Sigmoid colon (tissue), 7 donors: ENCODE measurements at regions of chr18 and their contacts with region 1.

Region 1: DNA sequence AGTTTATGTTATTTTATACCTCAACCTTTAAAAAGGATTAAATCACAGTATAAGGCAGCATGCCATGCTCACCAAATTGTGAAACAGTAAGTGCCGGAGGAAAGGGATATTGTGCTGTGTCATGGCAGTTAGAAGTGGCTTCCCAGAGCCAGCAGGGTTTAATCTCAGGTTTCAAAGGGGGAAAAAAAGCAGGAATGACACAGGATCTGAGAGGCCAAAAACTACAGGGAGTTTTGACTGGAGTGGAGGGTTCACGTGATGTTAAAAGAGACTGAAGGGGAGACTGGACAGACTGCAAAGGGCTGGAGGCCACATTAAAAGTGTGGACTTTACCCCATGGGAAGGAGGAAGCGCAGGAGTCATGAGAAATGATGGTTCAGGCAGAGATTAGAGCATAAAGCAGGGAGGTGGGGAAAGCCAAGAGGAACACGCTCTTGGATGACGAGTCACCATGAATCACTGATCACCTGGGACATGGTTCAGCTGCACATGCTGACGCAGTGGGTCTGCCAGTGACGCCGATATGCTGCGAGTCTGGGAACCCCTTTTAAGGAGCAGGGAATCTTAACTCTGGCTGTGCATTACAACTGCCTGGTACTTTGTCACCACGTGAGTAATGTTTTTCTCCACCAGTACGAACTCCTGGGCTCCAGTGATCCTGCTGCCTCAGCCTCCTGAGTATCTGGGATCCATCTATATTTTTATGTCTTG is 6.1 kb downstream of the CHMP1B start:
- DNase-seq: peak; percentile 95
- H3K4me3 ChIP-seq: peak overlapping the region in 2 of 4 donors; percentile 14 to 15
- H3K27ac ChIP-seq: peak overlapping the region; percentile 81 to 99 (median 84)
- H3K4me1 ChIP-seq: peaks cover 0 to 42% (median 38%) of the 10 kb centered on the region in 4 donors
- H3K27me3 ChIP-seq: no peaks in the 10 kb centered on the region
- CTCF ChIP-seq: no peak
- EP300 ChIP-seq: peak; percentile 89 to 96 (median 95)
- POLR2A ChIP-seq: no peak

Region 2: DNA sequence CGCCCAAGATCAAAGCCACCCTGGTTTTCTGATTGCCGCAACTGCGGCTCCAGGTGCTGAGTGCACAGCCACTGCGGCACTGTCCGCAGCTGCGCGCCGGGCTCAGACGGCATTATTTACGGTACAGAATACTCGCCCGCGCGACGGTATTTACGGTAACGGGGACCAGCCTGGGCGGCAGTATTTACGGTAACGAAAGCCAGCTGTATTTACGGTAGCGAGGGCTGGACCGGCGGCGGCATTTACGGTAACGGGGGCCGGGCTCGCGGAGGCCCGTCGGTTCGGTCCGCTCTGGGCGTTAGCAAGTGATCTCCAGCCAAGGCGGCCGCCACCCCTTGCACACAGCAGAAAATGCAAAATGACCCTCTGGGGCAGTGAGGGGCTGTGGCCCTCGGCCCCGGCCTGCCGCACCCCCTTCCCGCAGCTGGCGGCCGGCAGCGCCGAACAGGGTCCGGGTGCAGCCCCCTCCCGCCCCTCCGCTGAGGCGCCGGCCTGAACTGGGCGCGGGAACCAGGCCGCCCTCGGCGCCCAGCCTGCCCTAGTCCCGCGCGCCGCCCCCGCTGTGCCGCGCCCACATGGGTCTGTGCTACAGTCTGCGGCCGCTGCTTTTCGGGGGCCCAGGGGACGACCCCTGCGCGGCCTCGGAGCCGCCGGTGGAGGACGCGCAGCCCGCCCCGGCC is 168.2 kb before region 1 on chr18 and contains the start of gene GNAL:
- intact Hi-C with region 1: loop called (anchors 5 kb)
- DNase-seq: peak; percentile 88
- H3K4me3 ChIP-seq: peak within 1 kb of the TSS; percentile 58 to 80 (median 62)
- H3K27ac ChIP-seq: peak within 1 kb of the TSS; percentile 72 to 86 (median 82)
- H3K4me1 ChIP-seq: peaks cover 0 to 11% (median 8%) of the 10 kb centered on the region in 4 donors
- H3K27me3 ChIP-seq: no peaks in the 10 kb centered on the region
- CTCF ChIP-seq: no peak
- EP300 ChIP-seq: no peak
- POLR2A ChIP-seq: no peak
- total RNA-seq, gene GNAL: 13.2 to 25.1 (median 19.9) TPM

Region 3: DNA sequence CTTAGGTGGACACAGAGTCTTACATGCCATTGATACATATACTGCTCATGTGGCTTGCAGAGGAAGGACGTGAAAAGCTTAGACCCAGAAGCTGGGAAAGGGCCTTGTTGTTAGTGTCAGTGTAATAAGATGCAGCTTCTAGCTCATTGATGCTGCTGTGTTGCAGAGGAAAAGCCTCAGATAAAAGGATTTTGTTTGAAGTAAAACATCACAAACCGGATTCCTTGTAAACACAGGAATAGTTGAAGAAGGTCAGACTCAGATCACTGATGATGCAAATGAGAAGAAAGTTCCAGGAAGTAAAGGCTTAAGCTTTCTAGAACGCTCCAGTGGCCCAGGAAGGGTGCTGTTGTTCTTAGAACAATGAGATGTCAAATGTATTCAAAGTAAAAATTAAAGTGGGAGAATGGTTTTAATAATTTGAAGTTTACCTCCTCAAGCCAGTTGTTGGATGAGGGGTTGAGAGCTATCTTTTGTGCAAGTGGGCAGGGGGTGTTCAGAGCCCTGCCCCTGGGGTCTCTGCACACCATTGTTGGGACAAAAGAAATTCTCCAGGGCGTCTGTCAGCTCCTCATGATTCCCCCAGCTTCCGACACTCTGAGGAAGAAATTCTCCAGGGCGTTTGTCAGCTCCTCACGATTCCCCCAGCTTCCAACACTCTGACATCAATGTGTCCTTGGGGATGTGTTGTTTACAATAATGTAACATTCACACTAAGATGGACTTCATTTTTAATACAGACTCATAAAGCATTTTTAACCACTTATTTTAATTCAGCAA is 67.4 kb before region 1 on chr18:
- intact Hi-C with region 1: no loop called
- DNase-seq: no peak
- H3K4me3 ChIP-seq: no peak overlapping the region
- H3K27ac ChIP-seq: no peak overlapping the region
- H3K4me1 ChIP-seq: no peaks in the 10 kb centered on the region
- H3K27me3 ChIP-seq: no peaks in the 10 kb centered on the region
- CTCF ChIP-seq: no peak
- EP300 ChIP-seq: no peak
- POLR2A ChIP-seq: no peak